Activated T-helper 1 cell treated with anti-CD3 and anti-CD28 coated beads, Interleukin-12 subunit alpha, Interleukin-12 subunit beta, Interleukin-2, Interleukin-4 antibody, amounts not matched to agents 30 ng/mL and 10 ng/mL and 1 ng/mL, durations not matched to agents 14 hours and 24 hours and 36 hours (primary cell): ENCODE measurements at regions of chr1 and their contacts with region 1.

Region 1: GRCh38 chr1:233304489-233305102 is 9.1 kb upstream of the PCNX2 start:
- DNase-seq: no peak
- H3K4me3 Mint-ChIP-seq: no peak overlapping the region
- H3K27ac Mint-ChIP-seq: no peak overlapping the region
- H3K4me1 Mint-ChIP-seq: no peaks in the 10 kb centered on the region
- H3K27me3 Mint-ChIP-seq: peaks cover 35% of the 10 kb centered on the region

Region 2: GRCh38 chr1:233326811-233327650 is 22.4 kb after region 1 on chr1:
- intact Hi-C with region 1: loop called (anchors 1 kb)
- DNase-seq: peak; percentile 70
- H3K4me3 Mint-ChIP-seq: peak overlapping the region; percentile 81
- H3K27ac Mint-ChIP-seq: peak overlapping the region; percentile 47
- H3K4me1 Mint-ChIP-seq: peaks cover 11% of the 10 kb centered on the region
- H3K27me3 Mint-ChIP-seq: peaks cover 35% of the 10 kb centered on the region

Region 3: DNA sequence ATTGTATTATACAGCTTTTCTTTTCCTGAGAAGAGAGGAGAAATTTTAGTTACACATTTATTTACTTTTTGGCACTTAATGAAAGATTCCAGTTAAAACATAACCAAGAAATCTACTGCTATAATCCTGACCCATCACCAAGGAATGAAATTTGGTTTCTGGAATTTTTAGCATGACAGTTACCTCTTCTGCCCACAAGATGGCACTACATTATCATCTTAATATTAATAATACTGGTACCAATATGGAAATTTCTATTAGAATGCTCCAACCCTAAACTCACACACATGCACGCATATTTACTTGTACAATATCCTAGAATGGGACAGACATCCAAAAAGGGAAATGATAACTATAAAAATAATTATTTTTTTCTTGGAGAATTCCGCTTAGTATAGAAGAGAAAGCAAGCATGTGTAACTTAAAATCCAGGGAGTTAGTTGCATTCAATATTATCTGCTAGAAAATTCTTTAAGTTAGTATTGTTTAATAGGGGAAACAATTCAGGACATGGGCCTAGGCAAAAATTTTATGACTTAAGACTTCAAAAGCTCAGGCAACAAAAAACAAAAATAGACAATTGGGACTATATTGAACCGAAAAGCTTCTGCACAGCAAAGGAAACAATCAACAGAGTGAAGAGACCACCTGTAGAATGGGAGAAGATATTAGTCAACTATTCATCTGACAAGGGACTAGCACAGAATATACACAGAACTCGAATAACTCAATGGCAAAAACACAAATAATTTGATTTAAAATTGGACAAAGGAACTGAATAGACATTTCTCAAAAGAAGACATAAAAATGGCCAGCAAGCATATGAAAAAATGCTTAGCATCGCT is 60.3 kb after region 1 on chr1:
- intact Hi-C with region 1: loop called (anchors 5 kb)
- DNase-seq: no peak
- H3K4me3 Mint-ChIP-seq: no peak overlapping the region
- H3K27ac Mint-ChIP-seq: no peak overlapping the region
- H3K4me1 Mint-ChIP-seq: no peaks in the 10 kb centered on the region
- H3K27me3 Mint-ChIP-seq: peaks cover 2% of the 10 kb centered on the region

Region 4: DNA sequence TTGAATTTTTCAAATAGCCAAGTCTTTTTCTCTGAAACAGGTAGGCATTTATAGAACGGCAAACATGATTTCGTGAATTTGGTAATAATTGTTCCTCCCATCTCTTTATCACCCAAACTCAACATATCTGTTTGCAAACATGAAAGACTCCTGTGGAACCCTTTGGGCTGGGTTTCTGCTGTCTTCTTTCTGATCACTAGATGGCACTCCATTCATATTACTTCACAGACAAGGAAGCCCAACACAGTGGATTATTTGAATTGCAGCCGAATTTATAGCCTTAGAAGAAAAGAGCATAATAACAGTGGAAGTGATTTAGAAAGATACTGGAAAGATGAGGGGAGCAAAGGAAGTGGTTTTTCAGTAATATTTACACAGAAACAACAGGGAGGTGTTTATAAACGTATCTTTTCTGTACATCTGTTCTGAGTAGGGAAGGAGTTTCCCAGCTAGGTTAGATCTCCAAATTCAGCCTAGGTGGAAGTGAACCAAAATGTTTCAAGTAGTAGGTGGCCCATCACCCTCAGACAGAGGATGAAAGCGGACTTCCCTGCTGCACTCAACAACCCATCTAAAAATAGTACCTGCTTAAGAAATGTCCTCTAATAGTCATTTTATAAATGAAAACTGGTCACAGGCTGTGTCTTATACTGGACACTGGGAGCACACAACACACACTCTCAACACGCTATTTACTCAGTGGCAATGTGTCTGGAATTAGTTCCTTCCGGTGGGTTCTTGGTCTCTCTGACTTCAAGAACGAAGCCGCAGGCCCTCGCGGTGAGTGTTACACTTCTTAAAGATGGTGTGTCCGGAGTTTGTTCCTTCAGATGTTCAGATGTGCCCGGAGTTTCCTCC is 90.5 kb after region 1 on chr1:
- intact Hi-C with region 1: loop called (anchors 1 kb)
- DNase-seq: peak; percentile 17
- H3K4me3 Mint-ChIP-seq: no peak overlapping the region
- H3K27ac Mint-ChIP-seq: no peak overlapping the region
- H3K4me1 Mint-ChIP-seq: no peaks in the 10 kb centered on the region
- H3K27me3 Mint-ChIP-seq: peaks cover 8% of the 10 kb centered on the region

Region 5: DNA sequence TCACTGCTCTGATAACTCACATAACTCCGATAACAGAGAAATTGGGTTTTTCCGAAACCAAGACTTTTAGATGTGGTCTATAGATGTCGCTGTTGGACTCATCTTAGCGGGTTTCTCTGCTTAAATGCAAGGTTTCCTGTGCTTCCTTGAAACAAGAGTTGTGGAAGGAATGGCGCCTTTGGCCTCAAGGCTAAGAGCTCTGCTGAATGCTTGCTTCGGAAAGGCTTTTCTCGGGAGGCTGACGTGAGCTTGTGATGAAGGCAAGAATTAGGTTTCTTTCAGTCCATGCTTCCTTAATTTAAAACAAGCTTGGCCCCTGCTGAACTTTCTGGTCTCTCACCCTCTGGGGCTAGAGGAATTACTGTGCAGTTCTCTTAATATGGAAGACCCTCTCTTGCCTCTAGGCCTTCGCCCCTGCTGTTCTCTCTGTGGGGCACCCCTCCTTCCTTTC is 136.4 kb after region 1 on chr1:
- intact Hi-C with region 1: loop called (anchors 1 kb)
- DNase-seq: no peak
- H3K4me3 Mint-ChIP-seq: no peak overlapping the region
- H3K27ac Mint-ChIP-seq: no peak overlapping the region
- H3K4me1 Mint-ChIP-seq: no peaks in the 10 kb centered on the region
- H3K27me3 Mint-ChIP-seq: peaks cover 5% of the 10 kb centered on the region

Region 6: GRCh38 chr1:233730809-233731208 is 426.2 kb after region 1 on chr1:
- intact Hi-C with region 1: no loop called
- DNase-seq: no peak
- H3K4me3 Mint-ChIP-seq: no peak overlapping the region
- H3K27ac Mint-ChIP-seq: no peak overlapping the region
- H3K4me1 Mint-ChIP-seq: no peaks in the 10 kb centered on the region
- H3K27me3 Mint-ChIP-seq: no peaks in the 10 kb centered on the region

Region 7: GRCh38 chr1:233790662-233791375 is 486.2 kb after region 1 on chr1:
- intact Hi-C with region 1: loop called (anchors 1 kb)
- DNase-seq: peak; percentile 8
- H3K4me3 Mint-ChIP-seq: no peak overlapping the region
- H3K27ac Mint-ChIP-seq: no peak overlapping the region
- H3K4me1 Mint-ChIP-seq: no peaks in the 10 kb centered on the region
- H3K27me3 Mint-ChIP-seq: peaks cover 4% of the 10 kb centered on the region

Region 8: DNA sequence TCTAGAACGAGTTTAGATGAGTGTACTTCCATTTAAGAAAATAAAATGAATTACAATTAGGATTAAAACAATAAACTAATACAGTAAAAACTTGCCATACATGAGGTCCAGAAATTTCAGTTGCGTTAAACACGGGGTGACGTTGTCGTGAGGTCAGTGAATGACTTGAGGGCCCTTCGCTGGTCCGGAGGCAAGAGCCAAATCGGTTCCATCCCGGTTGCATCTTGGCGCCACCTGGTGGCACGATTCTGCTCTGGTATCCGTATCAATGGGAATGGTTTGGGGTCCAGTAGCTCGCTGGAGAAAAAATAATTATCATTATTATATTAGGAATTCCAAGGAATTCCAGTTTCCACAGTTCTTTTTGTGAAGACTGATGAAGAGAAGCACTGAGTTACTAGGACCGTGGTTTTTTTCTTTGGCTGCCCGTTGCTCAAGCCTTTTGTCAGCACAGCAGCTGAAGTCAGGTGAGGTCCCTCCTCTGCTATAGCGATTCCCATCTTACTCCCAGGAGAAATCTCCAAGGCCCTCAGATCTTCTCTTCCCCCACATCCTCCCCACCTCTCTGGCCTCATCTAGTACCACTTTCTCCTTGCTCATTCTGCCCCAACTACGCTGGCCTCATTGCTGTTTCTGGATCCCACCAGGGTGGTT is 761.3 kb after region 1 on chr1:
- intact Hi-C with region 1: loop called (anchors 1 kb)
- DNase-seq: peak; percentile 40
- H3K4me3 Mint-ChIP-seq: no peak overlapping the region
- H3K27ac Mint-ChIP-seq: no peak overlapping the region
- H3K4me1 Mint-ChIP-seq: no peaks in the 10 kb centered on the region
- H3K27me3 Mint-ChIP-seq: peaks cover 6% of the 10 kb centered on the region

Region 9: DNA sequence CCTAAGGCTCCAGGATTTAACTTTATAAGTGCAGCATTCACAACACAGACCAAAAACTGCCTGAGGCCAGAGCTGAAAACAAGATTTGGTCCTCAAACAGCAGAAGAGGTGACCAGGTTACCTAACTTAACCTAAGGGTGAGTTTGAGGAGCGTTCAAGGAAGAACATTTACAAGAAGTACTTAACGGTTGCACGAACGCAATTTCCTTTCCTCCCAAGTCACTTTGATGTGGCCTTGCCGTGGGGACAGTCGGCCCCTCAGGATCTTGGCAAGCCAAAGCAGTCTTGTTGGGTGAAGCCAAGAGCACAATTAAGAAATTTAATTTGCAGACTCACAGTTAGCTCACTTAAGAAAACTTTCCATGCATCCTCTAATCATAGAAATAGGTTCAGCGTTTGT is 866.0 kb after region 1 on chr1:
- intact Hi-C with region 1: no loop called
- DNase-seq: peak; percentile 13
- H3K4me3 Mint-ChIP-seq: peak overlapping the region; percentile 63
- H3K27ac Mint-ChIP-seq: peak overlapping the region; percentile 82
- H3K4me1 Mint-ChIP-seq: peaks cover 28% of the 10 kb centered on the region
- H3K27me3 Mint-ChIP-seq: no peaks in the 10 kb centered on the region